ENCODE measurements at regions of chr3 and their contacts with region 1.

Region 1: DNA sequence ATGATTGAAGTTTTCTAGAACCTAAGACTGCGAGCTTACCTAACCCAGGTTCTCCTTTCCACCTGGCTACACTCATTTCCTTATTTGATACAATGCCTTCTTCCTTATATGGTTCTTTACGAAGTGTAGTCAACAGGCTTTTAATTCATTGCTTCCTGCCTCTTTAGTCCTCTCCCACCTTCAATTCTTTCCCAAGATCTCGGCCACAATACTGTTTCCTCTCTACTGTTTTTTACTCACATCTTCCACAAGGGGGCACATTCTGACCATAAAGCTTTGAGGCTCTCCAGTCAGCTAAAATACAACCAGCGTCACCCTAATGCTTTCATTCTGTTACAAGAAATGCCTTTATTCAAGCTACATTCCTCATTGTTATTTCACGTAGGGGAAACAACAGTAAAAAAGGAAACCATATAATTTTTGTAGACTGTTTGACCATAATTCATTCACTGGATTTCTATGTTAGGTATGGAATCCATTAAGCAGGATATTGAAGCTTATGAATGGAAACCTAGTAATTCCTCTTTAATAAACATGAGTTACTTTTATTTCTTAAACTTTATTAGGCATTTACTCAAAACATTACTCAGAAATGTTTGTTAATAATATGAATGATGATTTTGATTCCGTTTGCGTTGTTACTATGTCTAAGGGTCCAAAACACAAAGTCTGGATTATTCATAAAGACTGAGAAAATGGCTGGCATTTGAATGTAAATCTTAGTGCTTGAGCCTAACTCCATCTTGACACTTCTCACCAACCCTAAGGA is 29.5 kb upstream of the VEPH1 start:
- DNase-seq: peak; percentile 57
- H3K4me3 ChIP-seq: no peak overlapping the region
- H3K27ac ChIP-seq: no peak overlapping the region
- H3K4me1 ChIP-seq: no peaks in the 10 kb centered on the region
- CTCF ChIP-seq: peak; percentile 93

Region 2: DNA sequence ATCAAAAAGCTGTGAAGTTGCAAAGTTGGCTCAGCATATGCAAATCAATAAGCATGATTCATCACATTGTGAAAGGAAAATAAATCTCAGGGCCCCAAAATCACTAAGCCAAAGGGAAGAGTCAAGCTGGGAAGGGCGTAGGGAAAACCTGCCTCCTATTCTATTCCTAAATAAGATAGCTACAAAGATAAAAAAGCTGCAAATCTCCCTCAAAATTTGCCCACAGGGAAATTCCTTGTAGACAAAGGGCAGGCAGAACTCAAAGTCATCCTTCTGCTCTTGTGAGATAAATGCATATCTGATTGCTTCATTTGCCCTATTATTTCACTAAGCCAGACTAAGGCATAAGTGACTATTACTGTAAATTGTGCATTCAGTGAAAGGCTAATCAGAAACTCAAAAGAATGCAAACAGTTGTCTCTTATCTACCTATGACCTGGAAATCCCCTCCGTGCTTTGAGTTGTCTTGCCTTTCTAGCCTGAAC is 342.3 kb before region 1 on chr3:
- CTCF ChIA-PET with region 1: no interaction called
- POLR2A ChIA-PET with region 1: no interaction called
- intact Hi-C with region 1: no loop called
- DNase-seq: no peak
- H3K4me3 ChIP-seq: no peak overlapping the region
- H3K27ac ChIP-seq: no peak overlapping the region
- H3K4me1 ChIP-seq: no peaks in the 10 kb centered on the region
- CTCF ChIP-seq: no peak

Region 3: GRCh38 chr3:157261000-157261399 is 271.7 kb before region 1 on chr3:
- CTCF ChIA-PET with region 1: no interaction called
- POLR2A ChIA-PET with region 1: no interaction called
- intact Hi-C with region 1: no loop called
- DNase-seq: no peak
- H3K4me3 ChIP-seq: no peak overlapping the region
- H3K27ac ChIP-seq: no peak overlapping the region
- H3K4me1 ChIP-seq: no peaks in the 10 kb centered on the region
- CTCF ChIP-seq: no peak

Region 4: GRCh38 chr3:157369727-157370421 is 162.8 kb before region 1 on chr3:
- CTCF ChIA-PET with region 1: no interaction called
- POLR2A ChIA-PET with region 1: no interaction called
- intact Hi-C with region 1: no loop called
- DNase-seq: no peak
- H3K4me3 ChIP-seq: no peak overlapping the region
- H3K27ac ChIP-seq: no peak overlapping the region
- H3K4me1 ChIP-seq: no peaks in the 10 kb centered on the region
- CTCF ChIP-seq: no peak

Region 5: DNA sequence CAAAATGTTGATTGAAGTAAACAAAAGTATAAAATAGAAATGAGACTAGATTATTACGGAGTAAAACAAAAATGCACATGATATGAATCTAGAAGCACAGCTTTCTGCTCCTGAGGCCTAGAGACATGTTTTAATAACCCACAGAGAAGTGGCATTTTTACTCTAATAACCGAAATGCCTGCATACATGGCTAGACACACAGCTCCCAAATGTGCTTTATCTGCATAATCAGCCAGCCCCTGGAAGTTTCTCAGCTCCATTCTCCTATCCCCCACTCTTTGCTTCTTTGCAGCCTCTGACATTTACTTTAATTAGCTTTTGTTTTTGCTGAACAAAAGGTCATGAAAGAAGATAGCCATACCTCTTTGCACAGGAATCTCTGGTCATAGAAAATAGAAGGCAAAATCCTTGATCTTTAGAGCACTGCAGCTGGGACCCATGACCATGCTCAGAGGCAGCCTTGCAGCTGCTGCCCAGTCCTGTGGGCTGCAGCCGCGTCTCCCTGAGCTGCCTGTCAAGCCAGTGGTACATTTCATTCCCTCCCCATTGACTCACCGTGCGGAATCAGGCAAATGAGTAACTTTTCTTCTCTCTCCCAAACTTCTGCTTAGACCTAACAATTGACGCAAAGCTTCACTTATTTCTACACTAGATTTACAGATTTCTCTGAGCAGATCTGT is 29.7 kb before region 1 on chr3 and contains the start of gene VEPH1:
- CTCF ChIA-PET with region 1: no interaction called
- POLR2A ChIA-PET with region 1: no interaction called
- intact Hi-C with region 1: no loop called
- DNase-seq: no peak
- H3K4me3 ChIP-seq: no peak within 1 kb of the TSS
- H3K27ac ChIP-seq: no peak within 1 kb of the TSS
- H3K4me1 ChIP-seq: no peaks in the 10 kb centered on the region
- CTCF ChIP-seq: no peak
- total RNA-seq, gene VEPH1: not detected in 2 replicates

Region 6: DNA sequence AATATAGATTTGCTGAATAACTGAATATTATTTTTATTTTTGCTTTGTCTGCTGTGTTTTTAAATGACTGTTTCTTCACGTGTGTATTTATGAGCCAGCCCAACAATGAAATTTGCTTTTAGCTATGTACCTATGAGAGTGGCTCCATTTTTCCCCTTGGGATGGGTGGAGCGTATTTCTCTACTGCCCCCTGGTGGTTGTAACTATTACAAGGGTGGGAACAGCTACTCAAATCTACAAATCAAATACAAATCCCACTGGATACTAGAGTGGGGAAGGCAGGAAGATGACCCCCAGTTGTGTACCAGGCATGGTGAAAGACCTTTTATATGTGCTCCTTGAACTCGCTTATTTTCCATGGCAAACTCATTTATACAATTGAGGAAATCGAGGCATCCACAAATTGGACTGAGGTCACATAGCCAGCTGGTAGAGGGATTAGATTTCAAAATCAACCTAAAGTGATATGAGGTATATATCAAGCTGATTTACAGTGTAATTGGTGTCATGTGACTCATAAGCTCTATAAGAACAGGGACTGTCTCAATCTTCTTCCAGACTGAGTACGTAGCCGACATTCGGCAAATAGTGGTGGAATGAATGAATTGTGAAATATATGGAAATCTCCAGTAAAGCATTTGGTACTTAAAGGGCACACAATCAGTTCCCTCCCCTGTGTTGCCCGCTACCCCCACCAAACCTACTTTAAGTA is 40.0 kb after region 1 on chr3:
- CTCF ChIA-PET with region 1: no interaction called
- POLR2A ChIA-PET with region 1: interaction called, 6 read pairs
- intact Hi-C with region 1: loop called (anchors 1 kb)
- DNase-seq: peak; percentile 51
- H3K4me3 ChIP-seq: no peak overlapping the region
- H3K27ac ChIP-seq: no peak overlapping the region
- H3K4me1 ChIP-seq: no peaks in the 10 kb centered on the region
- CTCF ChIP-seq: peak; percentile 95

Measured in OCI-LY7 (cell line).